K562 (cell line): ENCODE measurements at regions of chr20 and their contacts with region 1.

Region 1: DNA sequence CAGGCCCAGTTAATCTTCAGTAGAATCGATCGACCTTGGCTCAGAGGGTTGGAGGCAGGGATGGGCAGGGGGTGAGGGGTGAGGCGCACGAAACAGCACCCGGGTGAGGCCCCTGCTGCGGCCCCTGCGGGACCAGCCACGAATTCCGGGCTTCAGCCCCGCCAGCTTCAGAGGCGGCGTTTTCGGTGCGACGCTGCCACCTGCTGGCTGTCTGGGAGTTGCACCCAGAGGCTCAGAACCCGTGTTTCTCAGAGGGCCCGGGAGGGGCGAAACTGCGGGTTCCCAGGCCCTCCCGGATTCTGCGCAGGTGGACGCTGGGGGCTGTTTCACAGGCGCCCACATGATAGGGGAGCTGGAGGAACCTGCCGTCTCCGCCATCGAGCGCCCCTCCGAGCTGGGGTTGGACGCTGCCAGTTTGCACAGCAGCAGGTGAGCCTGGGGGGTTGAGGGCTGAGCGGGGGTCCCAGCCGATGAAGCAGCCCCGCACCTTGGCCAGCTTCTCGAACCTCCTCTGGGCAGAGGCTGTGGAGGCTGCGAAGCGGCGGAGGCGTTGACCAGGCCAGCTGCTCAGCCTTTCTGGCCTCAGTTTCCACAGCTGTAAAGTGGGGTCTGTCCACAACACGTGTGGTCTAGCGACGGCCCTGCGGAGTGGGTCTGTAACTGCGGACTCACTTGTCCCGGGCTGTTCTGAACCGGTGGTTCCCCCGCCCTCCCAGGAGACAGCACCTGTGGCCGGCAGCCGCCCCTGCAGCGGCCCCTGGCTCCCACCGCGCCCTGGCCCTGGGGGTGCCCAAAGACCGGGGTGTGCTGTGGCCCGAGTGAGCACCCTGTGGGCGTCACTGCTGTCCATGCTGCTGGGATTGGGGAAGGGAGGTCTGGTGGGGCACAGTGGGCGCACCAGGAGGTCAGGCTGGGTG is 2.5 kb upstream of the BHLHE23 start:
- DNase-seq: peak; percentile 85 to 91 (median 86)
- ATAC-seq: peak; percentile 99
- H3K4me3 ChIP-seq: no peak overlapping the region
- H3K27ac ChIP-seq: no peak overlapping the region
- H3K4me1 ChIP-seq: peaks cover 5 to 37% of the 10 kb centered on the region in 2 experiments; a peak in 3 of 5 replicates
- H3K27me3 ChIP-seq: peaks cover 35 to 54% of the 10 kb centered on the region in 2 experiments
- CTCF ChIP-seq: peak; percentile 89 to 98 (median 97)
- EP300 ChIP-seq: no peak
- POLR2A ChIP-seq: no peak
- RAD21 ChIP-seq: peak; percentile 94 to 97

Region 2: DNA sequence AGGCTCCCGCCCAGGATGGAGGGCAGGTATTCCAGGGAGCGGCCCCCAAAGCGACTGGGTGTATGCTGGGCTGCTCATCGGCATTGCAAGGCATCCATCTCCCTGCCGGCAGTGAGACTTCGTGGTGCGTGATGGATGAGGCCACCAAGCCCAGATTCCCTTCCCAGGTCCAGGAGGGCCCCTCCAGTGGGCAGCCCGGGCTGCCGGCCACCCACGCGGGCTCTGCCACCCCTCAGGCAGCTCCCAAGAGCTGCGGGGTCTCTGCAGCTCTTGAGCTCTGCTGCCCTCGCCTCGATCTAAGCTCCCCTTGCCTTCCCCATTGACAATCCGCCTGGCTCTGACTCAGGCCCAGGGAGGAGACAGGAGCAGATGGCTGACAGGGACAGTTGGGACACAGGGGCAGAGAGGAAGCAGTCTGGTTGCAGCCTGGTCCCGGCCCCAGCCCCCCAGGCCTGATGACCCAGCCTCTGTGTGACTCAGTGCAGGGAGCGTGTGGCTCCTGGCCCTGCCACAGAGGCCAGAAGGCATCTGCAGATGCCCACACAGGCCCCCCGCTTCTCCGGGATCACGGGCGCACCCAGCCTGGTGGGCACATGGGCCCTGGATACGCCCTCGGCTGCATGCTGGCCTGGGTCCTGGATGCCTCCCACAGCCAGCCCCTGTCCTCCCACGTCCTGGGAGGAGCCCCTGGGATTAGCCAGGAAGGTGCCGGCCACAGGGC is 334.0 kb before region 1 on chr20:
- CTCF ChIA-PET with region 1: no interaction called
- POLR2A ChIA-PET with region 1: no interaction called
- in situ Hi-C with region 1: no loop called
- intact Hi-C with region 1: no loop called
- DNase-seq: no peak
- ATAC-seq: no peak
- H3K4me3 ChIP-seq: no peak overlapping the region
- H3K27ac ChIP-seq: no peak overlapping the region
- H3K4me1 ChIP-seq: peaks cover 0 to 21% of the 10 kb centered on the region in 2 experiments; a peak in 1 of 5 replicates
- H3K27me3 ChIP-seq: peaks cover 21 to 51% of the 10 kb centered on the region in 2 experiments; a peak in 4 of 5 replicates
- CTCF ChIP-seq: no peak
- EP300 ChIP-seq: no peak
- POLR2A ChIP-seq: no peak
- RAD21 ChIP-seq: no peak

Region 3: DNA sequence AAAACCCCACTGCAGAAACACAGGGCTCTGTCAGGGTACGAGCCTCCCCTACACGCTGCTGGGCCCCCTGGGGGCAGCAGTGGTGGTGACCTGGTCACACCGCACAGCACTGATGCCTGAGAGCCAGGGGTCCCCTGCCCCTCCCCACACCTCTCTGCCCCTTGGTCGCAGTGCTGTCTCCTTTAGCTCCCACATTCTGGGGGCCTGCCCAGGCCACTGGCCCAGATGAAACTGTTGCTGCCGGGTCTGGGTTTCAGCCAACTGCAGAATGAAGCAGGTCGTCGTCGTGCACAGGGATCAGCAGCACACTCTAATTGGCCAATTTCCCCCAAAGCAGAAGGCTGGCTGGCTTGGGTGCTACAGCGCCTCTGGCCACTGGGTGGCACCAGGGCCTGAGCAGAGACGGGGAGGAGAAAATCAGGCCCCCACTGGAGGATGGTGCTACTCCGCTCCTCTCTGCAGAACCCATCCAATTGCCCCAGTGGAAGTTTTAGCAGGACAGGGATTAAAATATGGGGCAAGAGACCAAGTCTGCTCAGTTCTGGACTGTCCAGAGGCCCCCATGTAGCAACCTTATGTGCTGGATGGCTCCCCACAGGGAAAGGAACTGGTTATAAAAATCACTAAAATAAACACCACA is 109.1 kb before region 1 on chr20:
- CTCF ChIA-PET with region 1: interaction called, 30 read pairs
- POLR2A ChIA-PET with region 1: no interaction called
- in situ Hi-C with region 1: no loop called
- intact Hi-C with region 1: loop called (anchors 5 kb)
- DNase-seq: peak; percentile 78 to 91 (median 84)
- ATAC-seq: peak; percentile 98
- H3K4me3 ChIP-seq: no peak overlapping the region
- H3K27ac ChIP-seq: peak overlapping the region; percentile 46; the same call in 1 of the 3 replicates
- H3K4me1 ChIP-seq: peaks cover 6 to 10% of the 10 kb centered on the region in 2 experiments
- H3K27me3 ChIP-seq: no peaks in the 10 kb centered on the region
- CTCF ChIP-seq: peak; percentile 92 to 93 (median 93)
- EP300 ChIP-seq: 0 out of 2 replicates have a peak, but pooled peaks have one; percentile 22
- POLR2A ChIP-seq: peak; percentile 69
- RAD21 ChIP-seq: peak; percentile 48 to 74

Region 4: GRCh38 chr20:62972270-62973032 is 36.9 kb before region 1 on chr20:
- CTCF ChIA-PET with region 1: interaction called, 16 read pairs
- POLR2A ChIA-PET with region 1: interaction called, 5 read pairs
- in situ Hi-C with region 1: no loop called
- intact Hi-C with region 1: loop called (anchors 1 kb)
- DNase-seq: peak; percentile 86 to 90 (median 89)
- ATAC-seq: peak; percentile 98
- H3K4me3 ChIP-seq: no peak overlapping the region
- H3K27ac ChIP-seq: no peak overlapping the region
- H3K4me1 ChIP-seq: peaks cover 0 to 44% of the 10 kb centered on the region in 2 experiments; a peak in 3 of 5 replicates
- H3K27me3 ChIP-seq: peaks cover 25 to 93% of the 10 kb centered on the region in 2 experiments
- CTCF ChIP-seq: peak; percentile 93 to 95 (median 94)
- EP300 ChIP-seq: no peak
- POLR2A ChIP-seq: no peak
- RAD21 ChIP-seq: peak; percentile 76 to 93

Region 5: DNA sequence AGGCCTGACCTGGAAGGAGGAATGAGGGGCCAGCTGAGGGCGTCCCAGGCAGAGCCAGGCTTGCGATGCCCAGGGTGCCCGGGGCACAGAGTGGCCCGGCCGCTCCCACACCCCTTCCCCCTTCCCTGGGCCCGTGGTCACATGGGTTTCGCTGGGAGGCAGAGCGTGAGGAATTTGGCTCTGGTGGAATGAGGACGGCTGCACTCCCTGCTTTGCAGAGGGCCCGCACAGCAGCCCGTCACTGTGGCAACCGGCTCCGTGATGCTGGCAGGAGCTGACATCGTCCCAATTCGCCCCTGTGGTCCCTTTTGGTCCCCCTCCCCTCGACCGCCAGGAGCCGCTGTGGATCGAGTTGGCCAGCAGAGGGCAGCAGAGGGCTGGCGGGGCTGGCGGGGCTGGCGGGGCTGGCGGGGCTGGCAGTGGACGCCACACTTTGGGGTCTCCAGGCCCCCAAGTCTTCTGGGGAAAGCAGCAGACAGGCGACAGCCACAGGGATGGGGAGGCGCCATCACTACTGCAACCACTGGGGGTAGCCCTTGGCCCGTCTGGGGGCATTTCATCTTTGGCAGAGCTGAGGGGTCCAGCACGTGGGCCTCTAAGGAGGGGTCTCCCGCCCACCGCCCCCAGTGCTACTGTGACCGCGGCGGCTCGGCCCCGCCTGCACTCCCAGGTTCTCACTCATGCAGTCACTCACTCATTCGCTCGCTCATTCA is 47.1 kb after region 1 on chr20:
- CTCF ChIA-PET with region 1: no interaction called
- POLR2A ChIA-PET with region 1: no interaction called
- in situ Hi-C with region 1: no loop called
- intact Hi-C with region 1: no loop called
- DNase-seq: peak; percentile 32 to 79 (median 75)
- ATAC-seq: peak; percentile 87
- H3K4me3 ChIP-seq: no peak overlapping the region
- H3K27ac ChIP-seq: no peak overlapping the region
- H3K4me1 ChIP-seq: peaks cover 0 to 35% of the 10 kb centered on the region in 2 experiments; a peak in 3 of 5 replicates
- H3K27me3 ChIP-seq: peaks cover 5 to 67% of the 10 kb centered on the region in 2 experiments
- CTCF ChIP-seq: peak; percentile 65 to 93 (median 79)
- EP300 ChIP-seq: no peak
- POLR2A ChIP-seq: no peak
- RAD21 ChIP-seq: peak; percentile 39 to 58